Right ventricle myocardium inferior (tissue), 1 donor: ENCODE measurements at regions of chr3 and their contacts with region 1.

Region 1: DNA sequence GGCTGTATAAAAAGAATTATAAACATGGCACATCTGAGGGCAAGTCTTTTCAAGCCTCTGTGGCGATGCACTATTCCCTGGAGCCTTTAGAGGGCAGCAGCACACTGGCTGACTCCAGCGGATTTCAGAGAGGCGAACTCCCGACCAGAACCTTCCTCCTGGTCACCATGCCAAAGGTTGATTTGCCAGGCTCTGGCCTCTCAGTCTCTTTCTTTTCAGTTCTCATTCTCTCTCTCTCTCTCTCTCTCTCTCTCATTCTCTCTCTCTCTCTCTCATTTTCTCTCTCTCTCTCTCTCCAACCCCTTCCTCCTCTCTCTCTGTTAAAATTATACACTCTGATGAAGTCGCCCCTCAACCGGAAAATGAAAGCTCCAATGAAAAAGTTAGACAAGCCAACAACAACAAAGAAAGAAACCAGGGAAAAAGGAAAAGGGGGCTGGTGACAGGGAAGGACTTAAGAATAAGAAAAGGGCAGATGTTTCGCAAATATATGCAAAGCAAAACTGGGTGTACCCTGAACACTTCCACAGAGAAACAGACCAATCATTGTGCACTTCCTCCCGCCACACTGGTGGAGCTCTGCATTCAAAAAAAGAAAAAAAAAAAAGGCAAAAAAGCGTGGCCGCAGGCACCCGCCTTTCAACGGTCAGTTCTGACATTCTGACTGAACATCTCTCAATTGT is 90.2 kb downstream of the TIGIT start:
- DNase-seq: peak; percentile 76
- ATAC-seq: peak; percentile 80

Region 2: GRCh38 chr3:114336122-114336697 is 47.8 kb before region 1 on chr3:
- intact Hi-C with region 1: no loop called
- DNase-seq: no peak
- ATAC-seq: no peak

Region 3: GRCh38 chr3:114411811-114412803 is 28.1 kb after region 1 on chr3:
- intact Hi-C with region 1: loop called (anchors 1 kb)
- DNase-seq: no peak
- ATAC-seq: peak; percentile 53

Region 4: GRCh38 chr3:114454551-114455251 is 70.7 kb after region 1 on chr3:
- intact Hi-C with region 1: loop called (anchors 5 kb)
- DNase-seq: no peak
- ATAC-seq: peak; percentile 23

Region 5: DNA sequence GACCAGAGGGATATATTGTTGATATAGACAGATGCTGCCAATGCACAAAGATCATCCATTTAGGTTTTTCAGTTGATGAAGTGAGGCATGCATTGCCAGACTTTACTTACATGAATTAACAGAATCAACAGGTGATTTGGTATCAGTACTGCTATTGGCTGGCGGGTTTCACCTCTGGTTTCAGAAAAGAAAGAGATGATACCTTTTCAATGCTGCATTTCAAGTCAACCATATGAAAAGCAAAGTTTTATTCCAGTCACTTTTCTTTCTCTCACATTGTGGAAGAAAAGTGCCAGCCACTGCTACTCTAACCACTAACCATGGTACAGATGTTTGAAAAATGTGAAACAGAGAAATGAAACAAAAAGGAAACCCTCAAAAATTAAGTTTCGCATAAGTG is 198.9 kb after region 1 on chr3:
- intact Hi-C with region 1: loop called (anchors 10 kb)
- DNase-seq: no peak
- ATAC-seq: no peak

Region 6: DNA sequence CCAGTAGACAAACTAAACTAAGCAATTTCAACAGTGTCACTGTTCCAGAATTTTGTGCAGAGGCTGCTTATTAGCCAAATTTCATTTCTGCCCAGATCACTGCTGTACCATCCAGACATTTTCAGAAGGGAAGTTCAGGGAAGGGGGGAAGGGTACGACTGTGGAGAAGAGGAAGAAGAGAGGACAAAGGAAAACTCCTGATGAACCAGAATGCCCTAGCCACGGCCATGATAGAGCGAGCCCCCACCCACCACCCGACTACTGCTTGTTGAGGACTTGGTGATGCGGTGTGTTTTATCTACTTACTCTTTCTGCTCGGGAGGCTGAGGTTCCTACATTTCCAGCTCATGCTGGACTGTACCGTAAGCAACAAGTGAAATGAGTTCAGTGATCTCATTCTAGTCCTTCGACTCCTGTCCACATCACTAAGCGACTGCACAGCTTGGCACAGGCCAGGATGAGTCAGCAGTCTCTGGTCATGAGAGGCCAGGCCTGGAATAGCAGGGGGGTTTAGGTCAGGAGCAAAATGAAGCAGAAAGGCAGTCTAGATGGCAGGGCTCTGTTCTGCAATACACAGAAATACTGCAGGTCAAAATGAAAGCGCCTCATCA is 240.7 kb after region 1 on chr3:
- intact Hi-C with region 1: loop called (anchors 1 kb)
- DNase-seq: peak; percentile 95
- ATAC-seq: peak; percentile 95

Region 7: GRCh38 chr3:115085197-115085865 is 701.3 kb after region 1 on chr3:
- intact Hi-C with region 1: loop called (anchors 10 kb)
- DNase-seq: no peak
- ATAC-seq: peak; percentile 76